SK-N-SH (cell line): ENCODE measurements at regions of chr2 and their contacts with region 1.

Region 1: DNA sequence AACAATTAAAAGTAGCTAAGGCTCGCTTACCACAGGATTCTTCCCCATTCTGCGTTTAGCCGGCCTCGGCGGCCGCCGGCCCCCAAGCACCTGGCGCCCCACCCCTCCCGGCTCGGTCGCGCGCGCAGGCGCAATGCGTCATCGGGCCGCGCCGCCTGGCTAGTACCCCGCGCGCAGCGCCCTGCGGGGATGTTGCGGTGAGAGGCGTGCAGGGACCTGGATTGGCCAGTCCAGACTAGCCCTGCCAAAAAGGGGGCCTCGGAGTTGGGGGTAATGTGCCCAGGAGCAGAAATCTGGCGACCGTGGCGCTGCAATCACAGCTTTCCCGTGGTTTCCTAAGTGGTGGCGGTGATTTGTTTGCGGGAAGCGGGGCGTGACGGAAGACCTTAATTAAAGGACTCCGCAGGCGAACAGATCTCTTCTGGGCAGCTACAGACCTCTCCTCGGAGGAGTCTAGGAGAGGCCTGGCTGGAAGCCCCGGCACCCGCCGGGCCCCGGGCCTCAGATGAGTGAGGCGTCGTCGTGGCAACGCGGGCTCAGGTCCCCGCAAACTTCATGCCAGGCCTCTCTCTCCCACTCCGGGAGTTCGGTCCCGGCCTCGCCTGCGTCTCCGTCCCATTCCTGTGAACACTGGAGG is 606 bp downstream of the TMEM237 start:
- DNase-seq: peak; percentile 96
- H3K4me3 ChIP-seq: peak overlapping the region; percentile 77 to 89
- H3K27ac ChIP-seq: peak overlapping the region; percentile 85 to 96
- H3K4me1 ChIP-seq: peaks cover 12 to 15% of the 10 kb centered on the region in 2 experiments; a peak in 3 of 4 replicates
- H3K27me3 ChIP-seq: no peaks in the 10 kb centered on the region
- CTCF ChIP-seq: no peak
- EP300 ChIP-seq: peak in 1 of 2 experiments; percentile 10; a peak in 1 of 4 replicates
- RAD21 ChIP-seq: peak; percentile 13; the same call in 1 of the 2 replicates

Region 2: GRCh38 chr2:200829258-200829655 is 813.4 kb before region 1 on chr2:
- CTCF ChIA-PET with region 1: no interaction called
- POLR2A ChIA-PET with region 1: no interaction called
- DNase-seq: no peak
- H3K4me3 ChIP-seq: no peak overlapping the region
- H3K27ac ChIP-seq: no peak overlapping the region
- H3K4me1 ChIP-seq: no peaks in the 10 kb centered on the region; a peak in 1 of 4 replicates
- H3K27me3 ChIP-seq: no peaks in the 10 kb centered on the region
- CTCF ChIP-seq: no peak
- EP300 ChIP-seq: no peak
- RAD21 ChIP-seq: no peak

Region 3: DNA sequence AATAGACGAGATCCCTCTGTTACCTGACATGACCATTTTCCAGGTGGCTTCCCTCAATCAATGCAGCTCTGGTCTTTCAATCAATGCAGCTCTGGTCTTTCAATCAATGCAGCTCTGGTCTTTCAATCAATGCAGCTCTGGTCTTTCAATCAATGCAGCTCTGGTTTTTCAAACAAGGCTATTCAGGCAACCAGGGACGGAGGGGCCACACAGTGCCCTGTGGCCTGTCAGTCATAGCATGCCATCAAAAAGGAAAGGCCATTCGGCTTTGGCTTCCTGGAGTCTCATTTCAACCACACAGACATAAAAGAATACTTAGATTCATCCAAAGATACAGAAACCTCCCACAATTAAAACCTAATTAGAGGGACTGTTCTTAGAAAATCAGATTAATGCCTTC is 42.5 kb after region 1 on chr2:
- CTCF ChIA-PET with region 1: no interaction called
- POLR2A ChIA-PET with region 1: no interaction called
- DNase-seq: no peak
- H3K4me3 ChIP-seq: no peak overlapping the region
- H3K27ac ChIP-seq: no peak overlapping the region
- H3K4me1 ChIP-seq: peaks cover 0 to 2% of the 10 kb centered on the region in 2 experiments; a peak in 1 of 4 replicates
- H3K27me3 ChIP-seq: no peaks in the 10 kb centered on the region
- CTCF ChIP-seq: no peak
- EP300 ChIP-seq: no peak
- RAD21 ChIP-seq: no peak

Region 4: DNA sequence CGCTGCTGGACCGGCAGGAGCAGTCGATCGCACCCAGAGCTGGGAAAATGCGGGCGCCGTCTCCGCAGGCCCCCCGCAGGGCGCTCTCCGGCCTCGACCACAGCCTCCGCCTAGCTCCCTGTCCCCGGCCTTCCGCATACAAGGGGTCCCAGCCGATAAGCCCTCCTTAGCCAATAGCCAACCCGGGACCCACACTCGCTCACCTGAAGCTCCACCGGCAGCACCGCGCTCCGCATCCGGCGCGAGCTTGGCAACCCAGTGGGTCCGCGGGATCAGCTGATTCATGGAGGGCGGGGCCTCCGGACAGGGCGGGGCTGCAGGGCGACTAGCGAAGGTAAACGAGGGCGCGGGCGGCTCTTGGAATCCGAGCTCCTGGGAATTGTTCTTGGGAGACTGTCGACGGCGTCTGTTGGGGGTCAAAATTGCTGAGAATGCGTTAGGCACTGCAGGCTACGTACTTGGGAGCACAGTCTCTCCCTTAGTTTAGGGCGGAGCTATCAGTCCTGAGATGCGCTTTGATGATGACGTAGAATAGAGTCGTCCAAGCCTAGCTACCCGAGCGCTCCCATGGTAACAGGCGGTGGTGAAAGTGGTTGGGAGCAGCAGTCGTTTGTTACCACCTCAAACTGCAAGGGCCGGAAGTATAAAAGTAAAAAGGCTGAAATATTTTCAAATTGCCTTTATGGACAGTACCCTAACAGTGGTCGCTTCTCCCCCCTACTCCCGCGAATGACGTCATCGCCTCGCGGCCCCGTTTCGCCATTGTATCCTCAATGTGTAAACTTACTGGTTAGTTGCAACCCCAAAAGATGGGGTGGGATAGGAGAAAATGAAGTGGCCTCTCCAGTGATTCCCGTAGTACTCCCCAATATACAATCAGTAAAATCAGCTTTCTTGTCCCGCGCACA is 138.2 kb after region 1 on chr2 and contains the start of gene ALS2:
- CTCF ChIA-PET with region 1: no interaction called
- POLR2A ChIA-PET with region 1: interaction called, 10 read pairs
- DNase-seq: peak; percentile 90
- H3K4me3 ChIP-seq: peak within 1 kb of the TSS; percentile 97
- H3K27ac ChIP-seq: peak within 1 kb of the TSS; percentile 91 to 93
- H3K4me1 ChIP-seq: peaks cover 13 to 31% of the 10 kb centered on the region in 2 experiments
- H3K27me3 ChIP-seq: no peaks in the 10 kb centered on the region
- CTCF ChIP-seq: no peak
- EP300 ChIP-seq: no peak
- RAD21 ChIP-seq: no peak
- polyA plus RNA-seq, gene ALS2: 11.6 and 18.5 TPM in 2 replicates

Region 5: GRCh38 chr2:201858281-201859184 is 215.8 kb after region 1 on chr2:
- CTCF ChIA-PET with region 1: no interaction called
- POLR2A ChIA-PET with region 1: no interaction called
- DNase-seq: no peak
- H3K4me3 ChIP-seq: no peak overlapping the region
- H3K27ac ChIP-seq: peak overlapping the region in 1 of 2 experiments; percentile 41; a peak in 1 of 4 replicates
- H3K4me1 ChIP-seq: peaks cover 3 to 38% of the 10 kb centered on the region in 2 experiments
- H3K27me3 ChIP-seq: no peaks in the 10 kb centered on the region
- CTCF ChIP-seq: no peak
- EP300 ChIP-seq: no peak
- RAD21 ChIP-seq: no peak